Activated CD4-positive, alpha-beta T cell treated with anti-CD3 and anti-CD28 coated beads for 36 hours (primary cell): ENCODE measurements at regions of chr4 and their contacts with region 1.

Region 1: DNA sequence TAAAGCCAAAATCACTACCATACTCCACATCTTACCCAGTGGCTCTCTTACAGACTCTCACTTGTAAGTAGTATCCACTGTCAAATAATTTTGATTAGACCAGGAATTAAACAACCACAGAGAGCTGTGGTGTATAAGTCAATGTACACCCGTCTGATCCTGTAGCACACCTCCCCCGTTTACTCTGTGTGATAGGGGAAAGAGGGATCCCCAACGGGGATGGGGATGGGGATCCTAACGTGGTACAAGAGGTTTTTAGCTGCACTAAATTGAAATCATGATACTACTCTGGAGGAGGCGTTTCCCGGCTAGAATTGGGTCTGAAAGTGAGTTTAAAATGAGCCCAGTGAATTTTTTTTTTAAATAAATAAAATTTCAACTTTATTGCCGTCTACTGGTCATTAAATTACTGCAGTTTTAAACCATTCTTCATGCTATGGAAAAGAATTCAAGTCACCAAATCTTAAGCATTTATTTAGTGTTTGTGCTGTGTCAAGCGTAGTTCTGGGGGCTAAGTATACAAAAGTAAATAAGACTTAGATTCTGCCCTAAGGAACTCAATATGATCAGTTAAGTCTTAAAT is 76.6 kb downstream of the INTS12 start:
- DNase-seq: no peak
- ATAC-seq: no peak
- H3K4me3 Mint-ChIP-seq: no peak overlapping the region
- H3K27ac Mint-ChIP-seq: no peak overlapping the region
- H3K4me1 Mint-ChIP-seq: no peaks in the 10 kb centered on the region
- H3K27me3 Mint-ChIP-seq: peaks cover 4% of the 10 kb centered on the region

Region 2: DNA sequence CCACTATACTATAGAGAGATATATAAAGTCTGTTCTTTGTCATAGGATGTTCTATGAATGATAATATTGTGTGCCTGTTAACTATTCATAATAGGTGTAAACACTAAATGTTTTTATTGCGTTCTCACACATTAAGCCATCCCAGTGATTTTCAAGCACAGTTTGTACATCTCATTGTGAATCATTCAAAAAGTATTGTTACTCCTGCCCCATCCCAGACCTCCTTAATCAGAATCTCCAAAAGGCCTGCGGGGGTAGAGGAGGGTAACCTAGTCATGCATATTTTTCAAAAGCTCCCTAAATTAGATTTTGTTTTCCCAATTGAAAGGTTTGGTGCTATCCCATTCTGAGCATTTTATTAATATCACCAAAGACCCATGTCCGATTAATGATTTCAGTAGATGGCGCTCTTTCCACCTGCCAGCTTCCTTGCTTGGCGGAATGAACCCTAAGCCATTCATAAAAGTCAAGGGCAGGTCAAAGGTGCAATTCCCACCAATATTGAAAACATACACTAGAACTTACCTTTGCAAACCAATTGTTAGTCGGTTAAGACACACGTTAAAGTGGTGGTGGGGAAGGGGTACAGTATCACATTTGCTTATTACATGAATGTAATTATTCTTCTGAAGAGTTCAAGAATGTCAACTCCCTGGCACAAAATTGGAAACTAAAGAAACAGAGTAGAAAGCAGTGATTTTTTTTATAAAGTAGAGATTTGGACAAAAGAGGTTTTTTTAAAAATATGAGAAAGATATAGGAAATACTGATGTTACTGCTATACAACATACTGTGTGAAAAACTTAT is 491.0 kb before region 1 on chr4:
- CTCF ChIA-PET with region 1: no interaction called
- POLR2A ChIA-PET with region 1: no interaction called
- intact Hi-C with region 1: loop called in 1 of 2 experiments (anchors 5 kb)
- DNase-seq: peak; percentile 53
- ATAC-seq: no peak
- H3K4me3 Mint-ChIP-seq: no peak overlapping the region
- H3K27ac Mint-ChIP-seq: no peak overlapping the region
- H3K4me1 Mint-ChIP-seq: peaks cover 23% of the 10 kb centered on the region
- H3K27me3 Mint-ChIP-seq: no peaks in the 10 kb centered on the region

Region 3: GRCh38 chr4:105797225-105797624 is 165.3 kb after region 1 on chr4:
- CTCF ChIA-PET with region 1: no interaction called
- POLR2A ChIA-PET with region 1: no interaction called
- intact Hi-C with region 1: no loop called
- DNase-seq: no peak
- ATAC-seq: no peak
- H3K4me3 Mint-ChIP-seq: no peak overlapping the region
- H3K27ac Mint-ChIP-seq: no peak overlapping the region
- H3K4me1 Mint-ChIP-seq: no peaks in the 10 kb centered on the region
- H3K27me3 Mint-ChIP-seq: no peaks in the 10 kb centered on the region